Astrocyte of the cerebellum (primary cell): ENCODE measurements at regions of chr16 and their contacts with region 1.

Region 1: GRCh38 chr16:81896900-81897299 is 114.4 kb downstream of the SDR42E1 start:
- DNase-seq: no peak
- H3K4me3 ChIP-seq: no peak overlapping the region
- CTCF ChIP-seq: no peak

Region 2: DNA sequence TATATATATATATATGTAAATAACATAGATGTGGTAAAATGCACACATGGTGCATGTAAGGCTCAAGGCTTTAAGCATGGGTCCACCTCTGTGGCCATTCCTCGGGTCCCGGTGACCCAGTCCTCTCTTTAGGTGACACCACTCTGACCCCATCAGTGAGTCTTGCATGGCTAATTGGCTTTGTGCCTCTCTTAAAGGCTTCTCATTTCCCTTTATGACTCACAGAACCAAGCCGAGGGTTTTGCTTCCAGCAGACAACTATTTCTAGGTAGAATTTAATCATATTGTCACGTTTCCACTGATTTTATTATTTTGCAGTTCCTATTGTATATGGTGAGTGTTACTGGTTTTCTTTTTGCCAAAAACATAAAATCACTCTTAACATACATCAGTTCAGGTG is 58.1 kb before region 1 on chr16:
- in situ Hi-C with region 1: no loop called
- DNase-seq: no peak
- H3K4me3 ChIP-seq: no peak overlapping the region
- CTCF ChIP-seq: no peak

Region 3: GRCh38 chr16:81967358-81967757 is 70.5 kb after region 1 on chr16:
- in situ Hi-C with region 1: loop called (anchors 10 kb)
- DNase-seq: no peak
- H3K4me3 ChIP-seq: no peak overlapping the region
- CTCF ChIP-seq: no peak

Region 4: GRCh38 chr16:82229796-82230619 is 333.1 kb after region 1 on chr16:
- in situ Hi-C with region 1: loop called (anchors 10 kb)
- DNase-seq: peak; percentile 63
- H3K4me3 ChIP-seq: no peak overlapping the region
- CTCF ChIP-seq: peak; percentile 98